Ascending aorta (tissue), 2 donors: ENCODE measurements at regions of chr6 and their contacts with region 1.

Region 1: DNA sequence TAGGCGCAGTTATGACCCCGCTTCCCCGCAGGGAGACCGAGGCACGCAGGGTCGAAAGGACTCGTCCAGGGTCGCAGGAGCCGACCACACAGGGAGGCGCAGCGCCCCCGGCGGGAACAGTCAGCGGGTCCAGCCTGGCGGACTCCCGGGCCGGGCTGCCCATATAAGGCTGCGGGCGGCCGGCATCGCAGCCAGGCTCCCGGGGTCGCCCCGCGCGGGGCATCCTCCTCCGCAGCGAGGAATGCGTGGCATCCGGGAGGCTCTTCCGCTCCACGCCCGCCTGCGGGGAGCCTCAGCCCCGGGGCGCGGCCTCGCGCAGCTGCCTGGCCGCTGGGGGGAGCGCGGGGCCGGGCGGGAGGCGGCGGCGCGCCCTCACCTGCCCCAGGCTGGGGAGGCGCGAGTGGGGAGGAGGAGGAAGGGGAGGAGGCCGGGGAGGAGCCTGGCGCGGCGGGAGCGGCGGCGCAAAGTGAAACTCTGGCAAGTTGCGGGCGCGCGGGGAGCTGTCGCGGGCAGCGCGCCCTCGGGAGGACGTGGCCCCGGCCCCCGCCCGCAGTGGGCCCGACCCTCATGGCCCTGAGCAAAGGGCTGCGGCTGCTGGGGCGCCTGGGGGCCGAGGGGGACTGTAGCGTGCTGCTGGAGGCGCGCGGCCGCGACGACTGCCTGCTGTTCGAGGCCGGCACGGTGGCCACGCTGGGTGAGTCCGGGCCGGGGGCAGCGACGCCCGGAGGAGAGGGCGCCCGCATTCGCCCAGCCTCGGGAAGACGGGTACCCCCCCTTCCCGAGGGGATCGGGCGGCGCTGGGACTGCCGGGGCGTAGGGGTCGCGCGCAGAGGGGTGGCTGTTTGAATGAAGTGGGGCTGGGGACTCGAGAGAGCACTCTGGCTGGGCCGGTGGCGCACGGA is at the start of gene SYNJ2:
- DNase-seq: peak in 1 of 2 donors; percentile 86
- H3K4me3 ChIP-seq: peak within 1 kb of the TSS; percentile 77 to 94
- H3K27ac ChIP-seq: peak within 1 kb of the TSS; percentile 79 to 81
- H3K4me1 ChIP-seq: peaks cover 5 to 26% of the 10 kb centered on the region in 2 donors
- H3K27me3 ChIP-seq: no peaks in the 10 kb centered on the region
- CTCF ChIP-seq: peak; percentile 66 to 78 (median 74)
- total RNA-seq, gene SYNJ2: 3.0 TPM

Region 2: GRCh38 chr6:157755032-157755744 is 226.5 kb before region 1 on chr6:
- intact Hi-C with region 1: no loop called
- DNase-seq: no peak
- H3K4me3 ChIP-seq: no peak overlapping the region
- H3K27ac ChIP-seq: peak overlapping the region in 1 of 2 donors; percentile 71
- H3K4me1 ChIP-seq: peaks cover 4 to 13% of the 10 kb centered on the region in 2 donors
- H3K27me3 ChIP-seq: no peaks in the 10 kb centered on the region
- CTCF ChIP-seq: no peak

Region 3: DNA sequence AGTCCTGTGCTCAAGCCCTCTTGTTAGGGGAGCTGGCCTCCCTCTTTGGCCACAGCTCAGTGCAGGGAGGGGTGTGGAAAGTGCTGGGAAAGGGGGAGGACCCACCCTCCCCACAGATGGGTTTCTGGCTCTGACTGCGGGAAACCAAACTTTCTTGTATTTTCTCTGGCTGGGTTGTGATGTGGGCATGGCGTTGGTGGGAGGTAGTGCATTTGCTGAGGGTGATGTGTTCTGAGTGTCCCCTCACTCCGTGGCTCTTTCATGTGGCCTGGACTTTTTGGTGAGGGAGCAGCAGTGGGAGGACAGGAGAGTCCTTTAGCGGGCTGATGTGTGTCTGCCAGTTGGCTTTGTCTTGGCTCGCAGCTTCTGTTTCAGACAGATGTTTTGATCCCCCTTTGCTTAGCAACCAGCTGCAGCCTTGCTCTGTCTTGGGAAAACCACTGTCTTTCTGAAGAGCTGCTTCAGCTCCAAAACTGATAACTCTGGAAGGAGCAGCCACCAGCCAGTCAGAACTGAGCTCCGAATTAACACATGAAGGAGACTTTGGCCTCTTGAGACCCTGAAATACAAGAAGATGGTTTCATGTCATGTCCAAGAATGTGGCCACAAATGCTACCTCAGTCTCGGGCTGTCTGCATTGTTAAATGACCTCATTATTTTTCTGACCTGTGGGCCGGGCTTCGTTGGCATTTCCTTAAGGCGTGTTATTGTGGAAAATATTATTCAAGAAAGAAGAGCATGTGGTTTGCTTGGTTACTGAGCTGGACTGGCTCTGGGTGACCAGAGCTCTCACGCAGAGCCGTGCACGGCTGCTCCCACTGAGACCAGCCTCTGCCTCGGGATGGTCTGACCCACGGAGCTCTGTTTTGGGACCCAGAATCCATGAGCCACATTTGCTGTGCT is 21.6 kb after region 1 on chr6:
- intact Hi-C with region 1: loop called (anchors 1 kb)
- DNase-seq: peak in 1 of 2 donors; percentile 90
- H3K4me3 ChIP-seq: peak overlapping the region in 1 of 2 donors; percentile 24
- H3K27ac ChIP-seq: peak overlapping the region; percentile 90
- H3K4me1 ChIP-seq: peaks cover 23 to 44% of the 10 kb centered on the region in 2 donors
- H3K27me3 ChIP-seq: no peaks in the 10 kb centered on the region
- CTCF ChIP-seq: no peak

Region 4: GRCh38 chr6:158018851-158019361 is 37.3 kb after region 1 on chr6:
- intact Hi-C with region 1: loop called (anchors 5 kb)
- DNase-seq: no peak
- H3K4me3 ChIP-seq: no peak overlapping the region
- H3K27ac ChIP-seq: peak overlapping the region; percentile 76 to 92
- H3K4me1 ChIP-seq: peaks cover 6 to 18% of the 10 kb centered on the region in 2 donors
- H3K27me3 ChIP-seq: no peaks in the 10 kb centered on the region
- CTCF ChIP-seq: no peak

Region 5: DNA sequence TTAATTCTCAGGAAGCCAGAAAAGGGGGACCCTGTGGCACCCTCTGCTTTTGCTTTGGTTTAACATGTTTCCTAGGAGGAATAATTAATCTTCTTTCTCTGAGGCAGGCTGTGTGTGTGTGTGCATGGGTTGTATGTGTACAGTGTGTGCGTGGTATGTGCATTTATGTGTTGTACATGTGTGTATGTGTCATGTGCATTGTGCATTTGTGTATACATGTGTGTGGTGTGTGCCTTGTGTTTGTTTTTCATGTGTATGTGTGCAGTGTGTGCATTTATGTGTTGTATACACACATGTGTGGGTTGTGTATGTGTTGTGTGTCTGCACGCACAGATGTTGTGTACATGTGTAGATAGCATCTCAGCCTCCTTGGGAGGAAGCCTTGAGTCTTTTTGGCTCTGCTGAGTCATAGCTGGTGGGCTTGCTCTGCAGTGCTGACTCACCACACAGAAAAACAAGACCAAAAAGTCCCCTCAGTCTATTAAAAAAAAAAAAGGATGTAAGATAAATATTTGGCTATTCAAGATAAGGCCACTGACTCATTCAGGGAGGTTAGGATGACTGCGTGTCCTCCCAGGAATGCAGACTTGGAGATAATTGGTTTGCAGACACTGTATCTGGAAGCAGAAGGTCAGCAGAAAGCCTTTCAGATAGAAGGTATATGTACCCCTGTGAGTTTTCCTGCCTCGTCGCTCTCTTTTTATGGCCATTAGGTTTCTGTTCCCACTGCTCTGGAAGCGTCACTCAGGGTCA is 58.6 kb after region 1 on chr6:
- intact Hi-C with region 1: loop called (anchors 2 kb)
- DNase-seq: peak in 1 of 2 donors; percentile 83
- H3K4me3 ChIP-seq: no peak overlapping the region
- H3K27ac ChIP-seq: peak overlapping the region; percentile 91 to 95
- H3K4me1 ChIP-seq: peaks cover 43 to 68% of the 10 kb centered on the region in 2 donors
- H3K27me3 ChIP-seq: no peaks in the 10 kb centered on the region
- CTCF ChIP-seq: no peak

Region 6: DNA sequence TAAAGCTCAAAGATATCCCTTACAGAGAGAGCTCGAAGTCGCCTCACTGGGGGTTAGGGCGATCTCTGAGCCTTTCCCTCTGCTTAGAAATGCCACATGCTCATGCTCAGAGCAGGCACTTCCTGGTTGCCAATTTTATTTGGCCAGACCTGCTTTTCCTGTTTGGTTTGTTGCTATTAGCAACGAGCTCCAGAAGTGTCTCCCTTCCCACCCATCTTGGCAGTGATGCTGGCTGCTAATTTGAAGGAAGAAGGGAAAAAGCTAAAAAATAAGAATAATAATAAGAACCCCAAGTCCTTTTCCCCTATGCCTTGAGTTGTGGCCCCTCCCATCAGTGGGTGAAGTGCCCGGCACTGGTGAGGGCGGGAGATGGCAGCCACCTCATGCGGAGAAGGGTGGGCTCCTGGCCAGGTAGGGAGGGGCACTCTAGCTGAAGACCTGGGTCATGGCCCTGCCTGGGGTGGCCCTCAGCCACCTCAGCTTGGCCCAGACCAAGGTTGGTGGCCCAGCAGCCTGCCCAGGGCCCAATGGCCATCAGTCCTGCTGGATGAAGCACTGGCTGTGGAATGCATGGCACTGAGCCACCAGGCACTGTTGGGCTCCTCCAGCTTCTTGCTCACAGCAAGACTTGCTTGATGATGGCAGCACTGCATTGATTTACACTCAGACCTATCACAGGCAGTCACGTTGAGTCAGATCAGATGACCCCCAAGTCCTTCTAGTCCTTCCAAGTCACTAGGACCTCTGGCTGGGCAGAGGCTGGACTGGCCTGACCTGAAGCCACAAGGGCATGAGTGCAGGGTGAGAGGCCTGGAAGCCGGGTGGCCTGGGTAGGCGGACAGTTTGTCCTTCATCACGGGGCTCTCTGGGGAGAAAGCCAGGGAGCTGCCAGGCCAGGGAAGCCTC is 79.1 kb after region 1 on chr6:
- intact Hi-C with region 1: loop called (anchors 2 kb)
- DNase-seq: peak; percentile 78 to 97
- H3K4me3 ChIP-seq: peak overlapping the region in 1 of 2 donors; percentile 50
- H3K27ac ChIP-seq: peak overlapping the region; percentile 96 to 99
- H3K4me1 ChIP-seq: peaks cover 10 to 24% of the 10 kb centered on the region in 2 donors
- H3K27me3 ChIP-seq: no peaks in the 10 kb centered on the region
- CTCF ChIP-seq: no peak

Region 7: DNA sequence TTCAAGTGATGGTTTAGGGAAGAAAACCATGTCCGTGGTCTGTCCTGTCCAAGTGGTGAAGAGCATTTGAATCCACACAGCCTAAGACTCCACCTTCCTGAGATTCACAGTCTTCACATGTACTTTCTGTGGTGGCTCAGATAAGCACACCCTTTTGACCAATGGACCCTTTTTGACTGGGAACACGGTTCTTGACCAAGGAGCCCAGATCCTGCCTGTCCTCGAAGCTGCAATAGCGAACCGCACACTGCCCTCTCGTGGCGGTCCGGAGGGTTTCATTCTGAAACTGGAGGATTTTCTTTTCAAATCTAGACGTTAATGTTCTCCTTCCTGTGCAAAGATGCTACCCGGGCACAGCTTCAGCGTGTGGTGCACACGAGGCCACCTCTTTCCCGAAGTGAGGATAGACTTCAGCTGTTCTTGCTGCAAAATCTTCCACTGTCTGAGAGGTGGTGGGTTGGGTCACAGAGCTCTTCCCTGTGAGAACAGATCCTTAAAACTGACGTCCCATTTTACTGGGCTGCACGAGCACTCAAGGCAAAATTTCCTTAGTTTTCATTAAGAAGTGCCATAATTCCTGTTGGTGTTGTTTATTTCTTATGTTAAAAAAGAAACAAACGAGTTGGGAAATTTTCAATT is 90.6 kb after region 1 on chr6:
- intact Hi-C with region 1: loop called (anchors 1 kb)
- DNase-seq: peak in 1 of 2 donors; percentile 88
- H3K4me3 ChIP-seq: no peak overlapping the region
- H3K27ac ChIP-seq: peak overlapping the region; percentile 26 to 36
- H3K4me1 ChIP-seq: peaks cover 0 to 11% of the 10 kb centered on the region in 2 donors
- H3K27me3 ChIP-seq: no peaks in the 10 kb centered on the region
- CTCF ChIP-seq: peak; percentile 81 to 93 (median 82)

Region 8: GRCh38 chr6:158086504-158087223 is 105.0 kb after region 1 on chr6:
- intact Hi-C with region 1: no loop called
- DNase-seq: peak in 1 of 2 donors; percentile 84
- H3K4me3 ChIP-seq: peak overlapping the region in 1 of 2 donors; percentile 36
- H3K27ac ChIP-seq: peak overlapping the region; percentile 82 to 85
- H3K4me1 ChIP-seq: peaks cover 7 to 11% of the 10 kb centered on the region in 2 donors
- H3K27me3 ChIP-seq: no peaks in the 10 kb centered on the region
- CTCF ChIP-seq: no peak

Region 9: DNA sequence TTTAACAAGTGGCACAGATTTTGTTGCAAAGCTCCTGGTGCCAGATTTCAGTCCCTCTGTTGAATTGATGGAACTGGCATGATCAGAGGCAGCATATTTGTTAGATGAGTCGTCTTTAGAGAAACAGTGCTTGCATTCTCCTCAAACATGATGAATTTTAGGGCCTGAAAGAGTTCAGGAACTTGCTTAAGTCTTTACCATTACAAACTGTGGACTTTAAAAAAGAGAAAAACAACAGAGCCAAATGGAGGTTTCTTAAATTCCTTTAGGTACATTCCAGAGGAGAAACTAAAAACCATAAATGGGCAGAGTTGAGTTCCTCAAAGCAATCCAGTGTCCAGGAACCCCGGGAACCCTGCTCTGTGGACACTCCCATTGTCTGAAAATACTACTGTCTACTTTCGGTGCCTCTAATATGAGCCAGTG is 189.0 kb after region 1 on chr6:
- intact Hi-C with region 1: loop called (anchors 5 kb)
- DNase-seq: no peak
- H3K4me3 ChIP-seq: peak overlapping the region in 1 of 2 donors; percentile 40
- H3K27ac ChIP-seq: peak overlapping the region; percentile 77 to 80
- H3K4me1 ChIP-seq: peaks cover 11 to 52% of the 10 kb centered on the region in 2 donors
- H3K27me3 ChIP-seq: no peaks in the 10 kb centered on the region
- CTCF ChIP-seq: no peak